HEK293 (cell line): ENCODE measurements at regions of chr12 and their contacts with region 1.

Region 1: DNA sequence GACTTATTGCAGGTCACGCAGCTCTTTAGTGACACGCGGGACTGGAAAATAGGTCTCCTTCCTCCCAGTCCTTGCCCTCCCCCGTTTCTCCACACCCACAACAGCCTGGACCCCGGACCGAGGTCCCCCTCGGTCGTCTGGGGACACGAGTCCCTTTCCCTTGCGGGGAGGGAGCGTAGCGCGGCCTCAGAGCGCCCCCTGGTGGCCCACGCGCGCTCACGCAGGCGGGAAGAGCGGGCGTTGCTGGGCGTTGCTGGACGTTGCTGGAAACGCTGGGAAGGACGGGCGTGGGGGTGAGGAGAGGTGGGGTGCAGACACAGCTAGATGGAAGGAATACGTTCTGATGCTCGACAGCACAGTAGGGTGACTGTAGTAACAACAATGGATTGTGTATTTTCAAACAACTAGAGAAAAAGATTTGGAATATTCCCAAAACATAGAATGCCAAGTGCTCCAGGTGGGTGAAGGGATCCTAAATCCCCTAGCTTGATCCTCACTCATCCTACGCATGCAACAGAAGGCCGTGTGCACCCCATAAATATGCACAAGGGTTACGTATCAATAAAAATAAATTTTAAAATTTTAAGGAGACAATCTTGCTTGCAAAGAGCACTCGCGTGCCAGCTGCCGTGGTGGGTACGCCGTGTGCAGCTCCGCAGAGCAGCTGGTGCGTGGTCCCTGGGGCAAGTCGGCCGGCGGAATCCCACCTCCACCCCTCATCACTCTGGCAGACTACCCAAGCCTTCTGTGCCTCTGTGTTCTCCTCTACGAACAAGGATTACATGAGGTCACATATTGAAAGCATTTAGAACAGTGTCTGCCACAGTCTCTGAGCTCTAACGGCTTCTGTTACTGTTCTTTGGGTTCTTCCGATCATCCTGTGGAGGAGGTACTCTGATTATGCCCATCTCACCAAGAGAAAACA is 87.4 kb downstream of the B4GALNT3 start:
- H3K4me3 ChIP-seq: no peak overlapping the region
- H3K27ac ChIP-seq: no peak overlapping the region
- H3K4me1 ChIP-seq: no peaks in the 10 kb centered on the region
- CTCF ChIP-seq: peak; percentile 97

Region 2: GRCh38 chr12:452667-453210 is 94.4 kb before region 1 on chr12:
- CTCF ChIA-PET with region 1: interaction called, 51 read pairs
- POLR2A ChIA-PET with region 1: no interaction called
- H3K4me3 ChIP-seq: no peak overlapping the region
- H3K27ac ChIP-seq: no peak overlapping the region
- H3K4me1 ChIP-seq: peaks cover 2% of the 10 kb centered on the region; the same call in 1 of the 2 replicates
- CTCF ChIP-seq: no peak

Region 3: GRCh38 chr12:460301-461230 is 86.6 kb before region 1 on chr12:
- CTCF ChIA-PET with region 1: interaction called, 18 read pairs
- POLR2A ChIA-PET with region 1: no interaction called
- H3K4me3 ChIP-seq: peak overlapping the region; percentile 60
- H3K27ac ChIP-seq: peak overlapping the region; percentile 51; the same call in 1 of the 2 replicates
- H3K4me1 ChIP-seq: peaks cover 9% of the 10 kb centered on the region
- CTCF ChIP-seq: no peak

Region 4: GRCh38 chr12:530308-530707 is 16.9 kb before region 1 on chr12:
- CTCF ChIA-PET with region 1: interaction called, 30 read pairs
- POLR2A ChIA-PET with region 1: no interaction called
- H3K4me3 ChIP-seq: no peak overlapping the region
- H3K27ac ChIP-seq: no peak overlapping the region
- H3K4me1 ChIP-seq: no peaks in the 10 kb centered on the region
- CTCF ChIP-seq: no peak

Region 5: DNA sequence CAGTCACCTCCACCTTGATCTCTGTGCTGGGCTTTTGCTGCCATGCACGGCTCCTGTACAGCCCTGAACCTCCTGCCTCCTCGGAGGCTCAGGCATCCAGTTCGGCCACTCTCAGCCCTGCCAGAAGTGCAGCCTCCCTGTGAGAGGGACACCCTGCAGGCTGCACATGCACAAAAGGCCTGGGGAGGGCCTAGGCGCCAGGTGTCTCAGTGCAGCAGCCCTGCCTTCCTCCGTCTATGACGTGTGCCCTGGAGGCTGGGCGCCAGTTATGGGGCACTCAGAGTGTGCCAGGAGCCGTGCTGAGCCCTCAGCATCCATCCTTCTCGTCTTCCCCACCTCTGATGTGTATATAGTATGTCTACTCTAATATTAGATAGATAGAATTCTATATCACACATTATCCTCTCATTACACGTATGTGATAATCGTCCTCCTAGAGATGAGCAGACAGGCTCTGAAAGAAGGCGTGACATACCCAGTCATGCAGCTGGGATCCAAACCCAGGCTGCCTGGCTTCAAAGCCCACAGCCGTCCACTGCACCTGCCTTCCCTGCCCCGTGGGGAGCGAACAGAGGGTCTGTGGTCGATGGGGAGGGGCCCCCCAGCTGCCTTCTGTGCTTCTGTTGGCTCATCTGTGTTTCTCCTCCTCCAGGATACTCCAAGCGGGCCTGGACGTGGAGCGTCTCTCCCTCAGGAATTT is 13.7 kb after region 1 on chr12:
- CTCF ChIA-PET with region 1: interaction called, 15 read pairs
- POLR2A ChIA-PET with region 1: no interaction called
- H3K4me3 ChIP-seq: no peak overlapping the region
- H3K27ac ChIP-seq: no peak overlapping the region
- H3K4me1 ChIP-seq: no peaks in the 10 kb centered on the region
- CTCF ChIP-seq: no peak

Region 6: DNA sequence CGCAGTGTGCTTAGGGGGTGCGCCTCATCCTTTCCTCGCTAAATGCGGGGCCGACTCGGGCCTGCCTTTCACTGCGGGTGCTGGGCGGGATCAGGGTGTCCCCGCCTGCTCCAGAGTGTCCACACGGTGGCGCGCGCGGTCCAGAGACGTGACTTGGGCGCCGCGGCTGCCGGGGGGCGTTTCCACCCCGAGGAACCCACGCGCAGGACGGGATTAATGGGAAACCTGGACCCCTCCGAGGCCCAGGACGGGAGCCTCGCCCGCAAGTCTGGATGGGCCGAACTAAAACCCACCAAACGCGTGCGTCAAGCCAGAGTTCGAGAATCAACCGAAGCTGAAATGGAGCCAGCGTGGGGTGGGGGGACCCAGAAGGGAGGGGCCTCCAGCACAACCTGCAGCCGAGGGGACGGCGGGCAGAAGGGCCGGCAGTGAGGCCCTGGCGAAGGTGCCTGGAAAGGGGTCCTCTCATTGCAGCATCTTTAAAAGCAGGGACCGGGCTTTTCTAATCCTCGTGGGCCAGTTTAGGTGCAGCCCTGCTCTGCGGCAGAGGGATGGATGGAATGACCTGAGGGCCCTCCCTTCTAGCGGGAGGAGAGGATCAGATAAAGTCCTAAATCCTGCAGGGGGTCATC is 22.7 kb after region 1 on chr12:
- CTCF ChIA-PET with region 1: interaction called, 10 read pairs
- POLR2A ChIA-PET with region 1: no interaction called
- H3K4me3 ChIP-seq: peak overlapping the region; percentile 63
- H3K27ac ChIP-seq: peak overlapping the region; percentile 52; the same call in 1 of the 2 replicates
- H3K4me1 ChIP-seq: peaks cover 6% of the 10 kb centered on the region
- CTCF ChIP-seq: peak; percentile 97

Region 7: DNA sequence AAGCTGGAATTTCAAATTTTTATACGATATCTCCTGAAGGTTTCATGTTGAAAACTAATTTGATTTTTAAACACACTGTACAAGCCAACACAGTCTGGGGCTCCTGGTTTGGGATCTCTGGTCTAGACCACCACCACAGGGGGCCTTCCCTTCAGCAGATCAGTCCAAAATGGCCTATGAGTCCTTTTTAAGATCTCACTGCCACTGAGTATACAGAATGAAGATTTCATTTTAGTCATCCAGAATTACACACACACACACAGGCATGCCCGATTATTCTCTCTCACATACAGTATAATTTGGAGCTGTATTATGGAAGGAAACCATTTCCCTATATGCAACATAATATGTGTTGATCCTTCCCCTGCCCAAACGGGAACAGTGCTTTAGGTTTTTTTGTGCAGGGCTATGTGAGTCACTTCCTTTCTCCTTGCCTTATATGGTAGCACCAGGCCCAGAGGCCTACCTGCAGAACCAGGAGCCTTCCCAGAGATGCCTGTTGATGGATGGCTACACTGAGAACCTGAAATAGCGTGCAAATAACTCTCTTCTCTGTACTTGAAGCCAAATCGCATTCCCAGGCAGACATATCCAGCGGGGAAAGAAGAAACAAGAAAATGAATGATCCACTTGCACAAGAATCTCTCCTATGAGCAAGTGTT is 177.1 kb after region 1 on chr12:
- CTCF ChIA-PET with region 1: no interaction called
- POLR2A ChIA-PET with region 1: no interaction called
- H3K4me3 ChIP-seq: no peak overlapping the region
- H3K27ac ChIP-seq: no peak overlapping the region
- H3K4me1 ChIP-seq: no peaks in the 10 kb centered on the region
- CTCF ChIP-seq: no peak